Activated T-helper 2 cell treated with anti-CD3 and anti-CD28 coated beads, Interferon-gamma antibody, Interleukin-2, Interleukin-4, amounts not matched to agents 10 μg/mL and 5 μg/mL and 100 μg/mL, durations not matched to agents 14 hours and 24 hours and 36 hours (primary cell): ENCODE measurements at regions of chr10 and their contacts with region 1.

Region 1: DNA sequence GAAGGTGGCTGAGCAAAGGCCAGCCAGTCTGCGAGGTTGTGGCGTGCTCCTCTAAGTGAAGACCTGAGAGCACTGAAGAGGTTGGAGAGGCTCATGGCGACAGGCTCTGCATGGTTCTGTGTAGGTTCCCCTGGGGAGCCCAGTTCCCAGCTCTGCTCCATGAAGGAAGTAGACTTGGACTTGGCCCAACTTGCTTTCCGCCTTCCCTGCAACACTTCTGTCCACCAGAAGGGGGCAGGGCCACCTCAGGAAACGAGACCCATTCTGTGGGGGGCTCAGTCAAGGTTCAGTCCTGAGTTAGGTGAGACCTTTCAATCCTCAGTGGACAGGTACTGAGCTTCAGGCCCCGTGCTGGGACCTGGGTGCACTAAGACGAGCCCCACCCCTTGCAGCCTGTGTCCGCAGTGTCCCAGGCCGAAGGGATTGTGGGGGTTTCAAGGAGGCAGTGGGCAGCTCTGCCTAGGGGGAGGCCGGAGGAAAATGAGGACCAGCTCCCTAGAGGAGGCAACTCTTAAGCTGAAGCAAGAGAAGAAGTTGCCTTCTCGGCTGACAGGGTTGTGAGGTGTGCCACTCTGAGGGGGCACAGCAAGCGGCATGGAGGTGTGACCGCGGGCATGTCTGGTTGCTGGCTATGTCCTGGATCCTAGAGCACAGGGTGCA is 15.0 kb upstream of the PCBD1 start:
- DNase-seq: no peak
- H3K4me3 Mint-ChIP-seq: no peak overlapping the region
- H3K27ac Mint-ChIP-seq: no peak overlapping the region
- H3K4me1 Mint-ChIP-seq: no peaks in the 10 kb centered on the region
- H3K27me3 Mint-ChIP-seq: peaks cover 2% of the 10 kb centered on the region

Region 2: GRCh38 chr10:70866424-70866823 is 37.0 kb before region 1 on chr10:
- intact Hi-C with region 1: no loop called
- DNase-seq: no peak
- H3K4me3 Mint-ChIP-seq: no peak overlapping the region
- H3K27ac Mint-ChIP-seq: no peak overlapping the region
- H3K4me1 Mint-ChIP-seq: peaks cover 29% of the 10 kb centered on the region
- H3K27me3 Mint-ChIP-seq: no peaks in the 10 kb centered on the region

Region 3: DNA sequence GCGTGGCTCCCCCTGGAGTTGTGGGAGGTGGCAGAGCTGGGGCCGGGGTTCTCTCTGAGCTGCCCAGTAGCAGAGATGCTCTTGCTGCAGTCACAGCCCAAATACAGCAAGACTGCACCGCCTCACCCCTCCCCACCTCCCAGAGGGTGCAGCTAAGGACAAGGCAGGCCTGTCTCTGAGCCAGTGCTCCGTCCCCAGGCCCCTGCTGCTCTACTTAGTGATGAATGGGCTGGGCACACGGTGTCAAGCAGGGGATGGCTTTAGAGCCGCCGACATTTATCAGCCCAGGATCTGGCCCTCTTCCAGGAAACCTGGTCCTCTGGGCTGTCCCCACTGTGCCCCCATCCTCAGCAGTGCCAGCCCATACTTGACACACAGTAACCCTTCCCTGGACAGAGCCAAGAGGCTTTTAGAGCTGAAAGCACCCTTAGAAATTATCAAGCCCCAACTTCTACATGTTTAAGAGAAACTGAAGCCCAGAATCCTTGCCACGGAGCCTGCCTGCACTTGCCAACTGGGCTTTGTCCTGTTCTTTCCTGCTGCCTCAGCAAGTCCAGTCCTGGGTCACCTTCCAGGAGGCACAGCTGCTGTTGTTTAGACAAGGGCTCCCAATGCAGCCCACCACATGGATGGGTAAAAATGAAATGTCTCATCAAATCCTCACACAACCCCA is 171.8 kb after region 1 on chr10:
- intact Hi-C with region 1: no loop called
- DNase-seq: no peak
- H3K4me3 Mint-ChIP-seq: no peak overlapping the region
- H3K27ac Mint-ChIP-seq: no peak overlapping the region
- H3K4me1 Mint-ChIP-seq: no peaks in the 10 kb centered on the region
- H3K27me3 Mint-ChIP-seq: no peaks in the 10 kb centered on the region

Region 4: DNA sequence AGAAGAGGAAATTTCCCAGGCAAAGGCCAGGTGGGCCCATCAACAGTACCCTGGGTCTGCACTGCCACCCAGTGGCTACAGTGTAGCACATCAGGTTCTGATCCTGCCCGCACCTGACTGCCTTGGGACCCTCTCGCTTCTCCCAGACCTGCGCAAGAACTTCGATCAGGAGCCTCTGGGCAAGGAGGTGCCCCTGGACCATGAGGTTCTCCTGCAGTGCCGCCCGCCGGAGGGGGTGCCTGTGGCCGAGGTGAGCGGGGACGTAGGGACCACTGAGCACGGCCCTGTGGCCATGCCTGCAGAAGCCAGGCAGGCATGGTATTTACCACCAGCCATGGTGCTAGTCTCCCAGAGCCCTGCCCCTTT is 381.8 kb after region 1 on chr10:
- intact Hi-C with region 1: loop called (anchors 10 kb)
- DNase-seq: no peak
- H3K4me3 Mint-ChIP-seq: no peak overlapping the region
- H3K27ac Mint-ChIP-seq: no peak overlapping the region
- H3K4me1 Mint-ChIP-seq: no peaks in the 10 kb centered on the region
- H3K27me3 Mint-ChIP-seq: no peaks in the 10 kb centered on the region